Panc1 (cell line): ENCODE measurements at regions of chr6 and their contacts with region 1.

Region 1: DNA sequence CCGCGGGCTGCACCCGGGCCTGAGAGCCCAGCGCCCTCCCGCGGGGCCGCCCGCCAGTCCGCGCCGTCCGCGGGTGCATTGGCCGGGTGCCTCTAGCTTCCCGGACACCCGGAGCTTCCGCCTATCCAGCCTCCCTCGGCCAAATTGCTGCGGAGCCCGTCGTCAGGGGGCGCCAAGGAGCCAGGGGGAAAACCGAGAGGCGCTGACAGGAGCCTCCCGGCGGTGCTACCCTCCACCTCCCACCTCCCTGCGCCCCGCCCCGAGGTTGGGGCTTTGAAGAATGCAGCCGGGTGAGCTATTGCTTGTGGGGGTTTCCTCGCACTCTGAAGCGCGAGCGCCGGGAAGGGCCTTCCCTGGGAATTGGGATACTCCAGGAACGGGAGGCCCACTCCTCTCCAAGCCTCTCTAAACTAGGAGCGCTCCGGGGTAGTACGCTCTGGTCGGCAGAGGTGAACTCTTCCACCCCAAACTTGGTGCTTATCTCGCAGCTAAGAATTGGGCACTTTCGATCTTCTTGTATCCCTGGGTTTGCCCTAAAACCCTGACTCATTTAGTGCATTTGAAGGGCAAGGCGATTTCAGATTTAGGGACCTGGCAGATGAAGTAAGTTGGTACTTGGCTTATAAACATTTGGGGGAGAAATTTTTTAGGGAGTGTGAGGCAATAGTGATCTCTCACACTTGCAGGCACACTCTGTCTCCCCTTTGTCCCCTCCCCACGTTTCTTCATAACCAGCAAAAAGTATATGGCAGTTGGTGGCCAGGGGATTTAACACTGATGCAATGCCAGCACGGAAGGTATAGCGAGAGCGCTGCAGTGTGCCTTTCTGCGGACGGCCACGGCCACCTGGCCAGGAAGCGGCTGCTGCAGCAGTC is 501 bp downstream of the BEND6 start:
- DNase-seq: peak; percentile 89
- ATAC-seq: peak; percentile 91
- H3K4me3 ChIP-seq: peak overlapping the region; percentile 68 to 72
- H3K27ac ChIP-seq: peak overlapping the region; percentile 95
- H3K4me1 ChIP-seq: peaks cover 34% of the 10 kb centered on the region
- H3K27me3 ChIP-seq: no peaks in the 10 kb centered on the region
- CTCF ChIP-seq: peak; percentile 99

Region 2: DNA sequence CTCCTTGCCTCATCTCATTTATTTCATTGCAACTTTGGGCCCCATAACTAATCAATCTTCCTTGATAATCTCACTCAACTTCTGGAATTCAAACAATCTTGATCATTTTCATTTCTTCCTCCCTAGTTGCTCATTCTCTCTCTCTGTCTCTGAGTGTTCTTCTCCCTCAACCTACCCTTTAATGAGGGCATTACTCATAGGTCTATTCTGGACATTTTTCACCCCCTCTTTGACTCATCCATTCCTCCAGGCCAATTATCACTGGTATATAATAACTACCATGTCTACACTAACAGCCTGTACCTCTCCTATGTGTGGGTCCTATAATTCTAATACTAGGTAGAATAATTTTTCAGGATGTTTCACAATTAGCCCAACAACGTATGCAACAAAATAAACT is 786.8 kb before region 1 on chr6:
- CTCF ChIA-PET with region 1: no interaction called
- POLR2A ChIA-PET with region 1: no interaction called
- in situ Hi-C with region 1: no loop called
- intact Hi-C with region 1: no loop called
- DNase-seq: no peak
- ATAC-seq: no peak
- H3K4me3 ChIP-seq: no peak overlapping the region
- H3K27ac ChIP-seq: no peak overlapping the region
- H3K4me1 ChIP-seq: no peaks in the 10 kb centered on the region
- H3K27me3 ChIP-seq: no peaks in the 10 kb centered on the region
- CTCF ChIP-seq: no peak

Region 3: DNA sequence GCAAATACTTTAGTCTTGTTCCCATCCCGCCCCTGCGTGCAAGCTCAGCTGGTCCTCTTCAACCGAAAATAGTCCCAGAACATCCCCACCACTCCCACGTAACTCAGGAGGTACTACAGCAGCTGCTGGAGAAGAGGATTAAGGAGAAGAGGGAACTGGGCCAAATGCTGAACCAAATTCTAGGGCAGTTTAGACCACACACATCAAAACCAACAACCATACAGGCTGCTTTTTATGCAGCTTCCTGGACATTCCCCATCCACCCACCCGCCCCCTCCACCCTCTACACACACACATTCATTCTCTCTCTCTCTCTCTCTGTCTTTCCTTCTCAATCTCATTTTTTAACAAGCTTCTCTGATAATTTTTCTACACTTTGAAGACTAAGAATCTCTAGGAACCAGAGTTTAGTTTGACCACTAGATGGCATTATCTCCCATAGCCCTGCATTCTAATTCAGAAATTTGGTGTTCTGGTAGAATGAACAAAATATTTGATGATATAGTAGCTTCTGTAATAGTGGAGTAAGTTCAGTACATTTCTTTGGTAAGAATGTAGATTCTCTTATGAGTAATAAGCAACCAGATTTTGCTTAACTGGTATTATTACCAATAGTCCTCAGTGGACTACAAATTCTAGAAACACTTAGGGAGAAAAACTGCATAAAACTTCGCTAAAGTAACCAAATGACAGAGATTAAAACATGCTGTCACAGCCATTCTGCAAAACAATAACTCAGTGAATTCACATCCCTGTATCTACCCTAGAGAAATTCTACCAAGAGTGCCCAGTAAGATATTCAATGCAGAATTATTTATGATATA is 52.6 kb before region 1 on chr6:
- CTCF ChIA-PET with region 1: interaction called, 10 read pairs
- POLR2A ChIA-PET with region 1: no interaction called
- in situ Hi-C with region 1: no loop called
- intact Hi-C with region 1: loop called (anchors 2 kb)
- DNase-seq: no peak
- ATAC-seq: peak; percentile 46; the same call in 1 of the 2 replicates
- H3K4me3 ChIP-seq: no peak overlapping the region
- H3K27ac ChIP-seq: 0 out of 2 replicates have a peak overlapping the region, but pooled peaks have one; percentile 25
- H3K4me1 ChIP-seq: peaks cover 15% of the 10 kb centered on the region; the same call in 1 of the 2 replicates
- H3K27me3 ChIP-seq: no peaks in the 10 kb centered on the region
- CTCF ChIP-seq: peak; percentile 89

Region 4: GRCh38 chr6:56914798-56915658 is 40.4 kb before region 1 on chr6:
- CTCF ChIA-PET with region 1: no interaction called
- POLR2A ChIA-PET with region 1: no interaction called
- in situ Hi-C with region 1: no loop called
- intact Hi-C with region 1: no loop called
- DNase-seq: no peak
- ATAC-seq: peak; percentile 65; the same call in 1 of the 2 replicates
- H3K4me3 ChIP-seq: no peak overlapping the region
- H3K27ac ChIP-seq: 0 out of 2 replicates have a peak overlapping the region, but pooled peaks have one; percentile 31
- H3K4me1 ChIP-seq: peaks cover 25% of the 10 kb centered on the region
- H3K27me3 ChIP-seq: no peaks in the 10 kb centered on the region
- CTCF ChIP-seq: no peak

Region 5: DNA sequence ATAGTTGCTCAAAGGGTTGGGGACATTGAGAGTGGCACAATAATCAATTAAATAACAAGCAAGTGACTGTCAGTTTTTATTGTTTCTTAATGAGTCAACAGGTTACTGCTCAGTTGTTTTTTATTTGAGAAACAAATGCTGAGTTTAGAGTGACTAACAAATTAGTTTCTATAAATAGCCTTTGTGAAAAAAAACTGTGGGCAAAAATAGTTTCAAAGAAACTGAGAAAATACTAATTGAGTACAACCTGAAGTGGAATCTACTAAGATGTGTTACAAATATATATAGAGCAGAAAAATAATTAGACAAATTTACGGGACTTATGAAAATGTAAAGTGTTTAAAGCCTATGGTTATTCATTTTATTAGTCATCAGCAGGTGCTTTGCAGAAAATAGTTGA is 21.8 kb after region 1 on chr6:
- CTCF ChIA-PET with region 1: no interaction called
- POLR2A ChIA-PET with region 1: no interaction called
- in situ Hi-C with region 1: no loop called
- intact Hi-C with region 1: no loop called
- DNase-seq: no peak
- ATAC-seq: no peak
- H3K4me3 ChIP-seq: no peak overlapping the region
- H3K27ac ChIP-seq: no peak overlapping the region
- H3K4me1 ChIP-seq: no peaks in the 10 kb centered on the region
- H3K27me3 ChIP-seq: no peaks in the 10 kb centered on the region
- CTCF ChIP-seq: no peak

Region 6: GRCh38 chr6:57013521-57013926 is 58.1 kb after region 1 on chr6:
- CTCF ChIA-PET with region 1: no interaction called
- POLR2A ChIA-PET with region 1: no interaction called
- in situ Hi-C with region 1: no loop called
- intact Hi-C with region 1: loop called (anchors 5 kb)
- DNase-seq: no peak
- ATAC-seq: no peak
- H3K4me3 ChIP-seq: no peak overlapping the region
- H3K27ac ChIP-seq: no peak overlapping the region
- H3K4me1 ChIP-seq: no peaks in the 10 kb centered on the region
- H3K27me3 ChIP-seq: no peaks in the 10 kb centered on the region
- CTCF ChIP-seq: no peak

Region 7: GRCh38 chr6:57021086-57021720 is 65.8 kb after region 1 on chr6:
- CTCF ChIA-PET with region 1: interaction called, 12 read pairs
- POLR2A ChIA-PET with region 1: no interaction called
- in situ Hi-C with region 1: no loop called
- intact Hi-C with region 1: no loop called
- DNase-seq: peak; percentile 68
- ATAC-seq: peak; percentile 87
- H3K4me3 ChIP-seq: no peak overlapping the region
- H3K27ac ChIP-seq: no peak overlapping the region
- H3K4me1 ChIP-seq: no peaks in the 10 kb centered on the region
- H3K27me3 ChIP-seq: no peaks in the 10 kb centered on the region
- CTCF ChIP-seq: peak; percentile 81

Region 8: DNA sequence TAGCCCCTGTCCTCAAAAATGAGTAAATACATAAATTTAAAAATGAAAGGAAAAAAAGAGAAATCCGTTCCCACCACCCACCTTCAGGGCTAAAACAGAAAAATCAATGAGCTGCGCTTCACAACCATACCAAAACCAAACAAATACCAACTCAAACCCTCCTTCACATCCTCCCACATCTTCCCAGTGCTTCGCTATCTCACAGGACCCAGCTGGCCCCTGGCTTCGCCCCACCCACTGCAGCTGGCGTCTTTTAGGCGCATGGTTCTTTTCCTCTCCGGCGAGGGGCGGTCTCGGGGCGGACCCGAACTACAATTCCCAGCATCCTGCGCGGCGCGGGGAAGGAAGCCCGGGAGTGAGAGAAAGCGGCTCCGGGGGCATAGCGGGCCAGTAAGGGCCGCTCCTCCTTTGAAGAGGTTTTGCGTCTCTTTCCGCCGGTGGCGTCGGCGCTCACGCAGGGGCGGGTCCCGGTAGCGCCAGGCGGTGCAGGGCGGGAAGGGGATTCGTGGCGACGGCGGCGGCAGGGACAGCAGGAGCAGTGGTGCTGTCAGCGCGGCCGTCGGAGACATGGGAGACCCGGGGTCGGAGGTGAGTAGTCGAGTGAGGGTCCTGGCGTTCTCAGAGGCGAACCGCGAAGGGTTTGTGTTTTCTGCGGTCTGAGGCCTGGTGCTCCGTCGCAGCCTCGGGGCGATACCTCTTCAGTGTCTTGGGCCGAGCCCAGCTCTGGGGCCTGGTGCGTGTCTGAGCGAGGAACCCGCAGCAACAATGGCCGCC is 134.5 kb after region 1 on chr6 and contains the start of gene ZNF451:
- CTCF ChIA-PET with region 1: no interaction called
- POLR2A ChIA-PET with region 1: no interaction called
- in situ Hi-C with region 1: no loop called
- intact Hi-C with region 1: no loop called
- DNase-seq: peak; percentile 86
- ATAC-seq: peak; percentile 98
- H3K4me3 ChIP-seq: peak within 1 kb of the TSS; percentile 47 to 74
- H3K27ac ChIP-seq: peak within 1 kb of the TSS; percentile 82
- H3K4me1 ChIP-seq: peaks cover 24% of the 10 kb centered on the region
- H3K27me3 ChIP-seq: no peaks in the 10 kb centered on the region
- CTCF ChIP-seq: no peak
- total RNA-seq, gene ZNF451: 71.1 TPM

Region 9: DNA sequence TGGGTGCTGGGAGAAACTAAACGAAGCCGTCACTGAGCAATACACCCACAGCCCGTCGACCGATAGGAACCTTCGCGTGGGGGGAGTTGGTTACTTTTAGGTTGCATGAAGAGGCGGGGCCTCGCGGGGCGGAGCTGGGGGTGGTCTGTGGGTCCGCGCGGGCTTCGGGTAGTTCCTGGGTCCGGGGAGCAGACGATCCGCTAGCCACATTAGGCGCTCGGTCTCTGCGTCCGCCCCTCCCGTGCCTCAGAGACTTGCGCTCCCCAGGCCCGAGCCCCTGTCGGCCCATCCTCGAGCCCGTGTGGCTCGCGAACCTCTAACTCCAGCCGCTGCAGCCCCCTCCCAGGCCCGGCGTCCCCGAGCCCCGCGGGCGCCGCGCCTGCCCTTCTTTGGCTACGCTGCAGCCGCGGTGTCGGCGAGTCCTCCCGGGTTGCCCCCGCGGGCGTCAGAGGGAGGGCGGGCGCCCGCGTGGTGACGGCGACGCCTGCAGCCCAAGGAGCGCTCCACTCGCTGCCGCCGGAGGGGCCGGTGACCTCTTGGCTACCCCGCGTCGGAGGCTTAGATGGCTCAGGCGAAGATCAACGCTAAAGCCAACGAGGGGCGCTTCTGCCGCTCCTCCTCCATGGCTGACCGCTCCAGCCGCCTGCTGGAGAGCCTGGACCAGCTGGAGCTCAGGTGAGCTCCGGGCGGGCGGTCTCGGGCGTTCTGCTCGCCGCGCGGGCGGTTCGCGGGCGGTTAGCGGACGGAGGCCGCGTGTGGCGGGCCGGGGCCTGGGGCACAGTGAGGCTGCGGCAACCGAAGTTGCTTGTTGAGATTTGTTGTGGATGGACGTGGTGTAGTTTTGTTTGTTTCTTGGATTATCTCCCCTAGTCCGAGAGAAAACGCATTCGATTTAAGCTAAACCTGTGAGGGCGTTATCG is 217.0 kb after region 1 on chr6 and contains the start of gene BAG2:
- CTCF ChIA-PET with region 1: no interaction called
- POLR2A ChIA-PET with region 1: no interaction called
- in situ Hi-C with region 1: no loop called
- intact Hi-C with region 1: loop called (anchors 10 kb)
- DNase-seq: peak; percentile 63
- ATAC-seq: peak; percentile 96
- H3K4me3 ChIP-seq: peak within 1 kb of the TSS; percentile 89 to 92
- H3K27ac ChIP-seq: peak within 1 kb of the TSS; percentile 95
- H3K4me1 ChIP-seq: peaks cover 46% of the 10 kb centered on the region
- H3K27me3 ChIP-seq: no peaks in the 10 kb centered on the region
- CTCF ChIP-seq: 0 out of 2 replicates have a peak, but pooled peaks have one; percentile 21
- total RNA-seq, gene BAG2: 14.0 TPM

Region 10: DNA sequence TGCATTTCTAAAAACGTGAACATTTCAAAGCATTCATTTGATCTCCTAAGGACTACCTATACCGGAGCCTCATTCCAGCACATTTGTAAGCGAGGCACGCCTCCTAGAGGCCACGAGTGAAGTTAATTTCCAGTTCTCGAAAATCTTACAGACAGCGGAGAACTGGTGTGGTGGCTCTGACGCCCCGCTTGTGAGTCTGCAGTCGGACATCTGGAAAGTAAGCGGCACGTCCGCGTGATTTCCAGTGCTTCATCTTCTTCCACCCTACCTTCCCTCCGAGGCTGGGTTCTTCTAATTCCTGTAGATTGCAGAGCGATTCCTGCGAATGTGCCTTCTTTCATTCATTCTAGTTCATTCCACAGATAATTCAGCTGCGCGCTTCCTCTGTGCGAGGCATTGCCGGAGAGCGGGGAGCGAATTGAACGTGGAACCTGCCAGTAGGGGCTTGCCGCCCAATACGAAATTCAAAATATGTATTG is 361.2 kb after region 1 on chr6:
- CTCF ChIA-PET with region 1: interaction called, 6 read pairs
- POLR2A ChIA-PET with region 1: no interaction called
- in situ Hi-C with region 1: no loop called
- intact Hi-C with region 1: loop called (anchors 5 kb)
- DNase-seq: peak; percentile 92
- ATAC-seq: peak; percentile 90
- H3K4me3 ChIP-seq: peak overlapping the region; percentile 77 to 91
- H3K27ac ChIP-seq: peak overlapping the region; percentile 94
- H3K4me1 ChIP-seq: peaks cover 47% of the 10 kb centered on the region
- H3K27me3 ChIP-seq: no peaks in the 10 kb centered on the region
- CTCF ChIP-seq: peak; percentile 94